CD4-positive, alpha-beta memory T cell (primary cell): ENCODE measurements at regions of chr1 and their contacts with region 1.

Region 1: DNA sequence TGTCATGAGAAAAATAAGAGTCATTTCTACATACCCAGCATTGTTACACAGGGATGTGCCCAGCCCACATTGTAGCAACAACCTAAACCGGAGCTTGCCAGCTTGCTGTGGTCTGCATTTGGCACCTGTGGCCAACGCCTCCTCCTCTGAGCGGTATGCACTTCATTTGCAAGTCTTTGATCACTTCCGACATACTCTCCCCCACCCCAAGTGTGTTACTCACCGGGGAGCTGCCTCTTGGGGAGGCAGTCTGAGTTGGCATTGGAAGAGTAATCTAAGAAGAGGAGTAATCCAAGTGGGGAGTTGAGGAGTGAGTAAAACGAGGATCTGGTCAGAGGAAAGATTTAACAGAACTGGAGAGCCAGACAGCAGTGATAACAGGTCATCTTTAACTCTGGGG is 3.8 kb downstream of the BCL9 start:
- DNase-seq: peak; percentile 86 to 96 (median 90)
- H3K4me3 ChIP-seq: no peak overlapping the region
- H3K4me3 Mint-ChIP-seq: peak overlapping the region in 6 of 8 donors; percentile 63 to 76 (median 72)
- H3K27ac ChIP-seq: no peak overlapping the region
- H3K27ac Mint-ChIP-seq: peak overlapping the region in 6 of 7 donors; percentile 72 to 96 (median 82)
- H3K4me1 ChIP-seq: peaks cover 66% of the 10 kb centered on the region
- H3K4me1 Mint-ChIP-seq: peaks cover 20 to 44% (median 31%) of the 10 kb centered on the region in 4 donors
- H3K27me3 ChIP-seq: no peaks in the 10 kb centered on the region
- H3K27me3 Mint-ChIP-seq: no peaks in the 10 kb centered on the region

Region 2: GRCh38 chr1:147515046-147515869 is 29.9 kb before region 1 on chr1:
- CTCF ChIA-PET with region 1: interaction called, 13 read pairs
- POLR2A ChIA-PET with region 1: interaction called, 6 read pairs
- intact Hi-C with region 1: no loop called
- DNase-seq: peak in 4 of 5 donors; percentile 9 to 29 (median 24)
- H3K4me3 ChIP-seq: no peak overlapping the region
- H3K4me3 Mint-ChIP-seq: no peak overlapping the region
- H3K27ac ChIP-seq: no peak overlapping the region
- H3K27ac Mint-ChIP-seq: peak overlapping the region in 2 of 7 donors; percentile 39 to 51
- H3K4me1 ChIP-seq: no peaks in the 10 kb centered on the region
- H3K4me1 Mint-ChIP-seq: peaks cover 5 to 7% (median 6%) of the 10 kb centered on the region in 4 donors
- H3K27me3 ChIP-seq: no peaks in the 10 kb centered on the region
- H3K27me3 Mint-ChIP-seq: peaks cover 0 to 9% of the 10 kb centered on the region in 2 donors

Region 3: DNA sequence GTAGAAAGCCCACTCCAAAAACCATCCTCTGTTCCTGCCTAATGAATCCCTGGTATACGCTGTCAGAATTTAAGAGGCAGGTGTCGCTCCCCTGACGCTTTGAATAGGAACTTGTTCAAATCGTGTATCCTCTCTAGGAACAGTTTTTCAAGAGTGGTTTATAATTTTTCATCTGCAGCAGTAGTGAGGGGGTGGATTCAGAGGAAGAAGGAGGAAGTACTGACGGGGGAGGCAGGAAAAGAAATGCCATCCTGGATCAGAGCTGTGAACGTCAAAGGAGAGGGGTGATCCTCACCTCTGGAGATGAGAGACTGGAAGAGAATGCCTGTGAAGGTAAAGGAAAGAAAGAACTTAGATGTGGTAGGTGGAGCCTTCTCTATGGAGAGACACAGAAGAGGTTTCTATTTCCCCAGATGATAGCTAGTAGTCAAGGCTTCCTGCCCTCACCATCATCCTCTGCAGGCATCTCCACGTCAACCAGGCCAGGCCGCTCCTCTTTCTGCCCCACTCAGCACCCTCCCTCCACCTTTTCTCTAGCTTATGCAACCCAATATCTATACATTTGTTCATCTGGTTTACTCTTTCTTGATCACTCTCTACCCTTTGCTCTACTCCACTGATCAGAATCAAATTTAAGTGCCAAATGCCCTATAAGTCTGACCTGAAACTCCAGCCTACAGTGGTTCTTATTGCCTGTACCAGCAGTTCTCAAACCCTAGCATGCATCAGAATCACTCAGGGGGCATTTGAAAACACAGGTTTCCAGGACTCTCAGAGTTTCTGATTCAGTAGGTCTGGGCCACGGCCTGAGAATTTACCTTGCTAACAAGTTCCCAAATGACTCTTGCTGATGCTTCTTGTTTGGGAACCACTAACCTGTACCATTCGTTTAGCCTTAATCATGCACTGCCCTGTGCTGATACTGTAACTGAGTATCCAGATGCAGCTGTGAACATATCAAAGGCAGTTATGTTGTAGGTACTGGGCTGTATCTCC is 16.9 kb before region 1 on chr1:
- CTCF ChIA-PET with region 1: interaction called, 4 read pairs
- POLR2A ChIA-PET with region 1: interaction called, 17 read pairs
- intact Hi-C with region 1: no loop called
- DNase-seq: peak in 3 of 5 donors; percentile 10 to 27 (median 15)
- H3K4me3 ChIP-seq: no peak overlapping the region
- H3K4me3 Mint-ChIP-seq: no peak overlapping the region
- H3K27ac ChIP-seq: no peak overlapping the region
- H3K27ac Mint-ChIP-seq: no peak overlapping the region
- H3K4me1 ChIP-seq: peaks cover 14% of the 10 kb centered on the region
- H3K4me1 Mint-ChIP-seq: peaks cover 0 to 3% (median 0%) of the 10 kb centered on the region in 4 donors
- H3K27me3 ChIP-seq: no peaks in the 10 kb centered on the region
- H3K27me3 Mint-ChIP-seq: peaks cover 0 to 7% of the 10 kb centered on the region in 2 donors

Region 4: DNA sequence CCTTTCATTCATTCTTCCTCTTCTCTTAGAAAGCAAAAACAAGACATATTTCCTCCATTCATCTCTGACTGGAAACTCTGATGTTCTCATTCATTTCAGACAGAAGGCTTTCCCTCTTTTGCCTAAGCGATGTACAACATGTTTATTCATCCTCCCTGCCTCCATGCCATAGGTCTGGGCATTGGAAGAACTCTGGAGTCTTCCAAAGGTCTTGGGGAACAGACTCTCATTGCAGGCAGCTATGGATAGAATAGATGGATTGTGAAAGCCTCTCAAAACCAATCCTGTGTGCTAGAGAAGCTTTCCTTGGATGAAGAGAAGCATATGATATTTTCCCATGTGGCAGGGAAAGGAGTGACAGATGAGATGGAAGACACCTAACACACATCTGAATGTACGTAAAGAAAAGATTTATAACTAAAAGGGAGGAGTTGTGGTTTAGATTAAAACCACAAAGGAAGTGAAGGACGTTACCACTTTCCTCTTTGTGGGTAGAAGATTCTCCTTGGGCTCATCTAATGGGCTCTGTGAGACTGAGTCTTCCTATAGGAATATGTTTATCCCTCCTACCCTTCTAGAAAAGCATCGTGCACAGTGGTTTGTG is 34.9 kb after region 1 on chr1:
- CTCF ChIA-PET with region 1: no interaction called
- POLR2A ChIA-PET with region 1: interaction called, 7 read pairs
- intact Hi-C with region 1: loop called (anchors 2 kb)
- DNase-seq: peak; percentile 37 to 53 (median 40)
- H3K4me3 ChIP-seq: no peak overlapping the region
- H3K4me3 Mint-ChIP-seq: peak overlapping the region in 7 of 8 donors; percentile 4 to 86 (median 61)
- H3K27ac ChIP-seq: no peak overlapping the region
- H3K27ac Mint-ChIP-seq: peak overlapping the region in 4 of 7 donors; percentile 1 to 66 (median 49)
- H3K4me1 ChIP-seq: peaks cover 23% of the 10 kb centered on the region
- H3K4me1 Mint-ChIP-seq: peaks cover 16 to 26% (median 21%) of the 10 kb centered on the region in 4 donors
- H3K27me3 ChIP-seq: peaks cover 11% of the 10 kb centered on the region
- H3K27me3 Mint-ChIP-seq: peaks cover 30 to 32% of the 10 kb centered on the region in 2 donors

Region 5: GRCh38 chr1:147599362-147600118 is 54.4 kb after region 1 on chr1:
- CTCF ChIA-PET with region 1: interaction called, 6 read pairs
- POLR2A ChIA-PET with region 1: interaction called, 121 read pairs
- intact Hi-C with region 1: loop called (anchors 1 kb)
- DNase-seq: peak; percentile 94 to 96 (median 95)
- H3K4me3 ChIP-seq: peak overlapping the region; percentile 67 to 72
- H3K4me3 Mint-ChIP-seq: peak overlapping the region; percentile 86 to 92 (median 90)
- H3K27ac ChIP-seq: peak overlapping the region; percentile 47
- H3K27ac Mint-ChIP-seq: peak overlapping the region; percentile 48 to 91 (median 85)
- H3K4me1 ChIP-seq: peaks cover 24% of the 10 kb centered on the region
- H3K4me1 Mint-ChIP-seq: peaks cover 15 to 33% (median 25%) of the 10 kb centered on the region in 4 donors
- H3K27me3 ChIP-seq: no peaks in the 10 kb centered on the region
- H3K27me3 Mint-ChIP-seq: no peaks in the 10 kb centered on the region

Region 6: DNA sequence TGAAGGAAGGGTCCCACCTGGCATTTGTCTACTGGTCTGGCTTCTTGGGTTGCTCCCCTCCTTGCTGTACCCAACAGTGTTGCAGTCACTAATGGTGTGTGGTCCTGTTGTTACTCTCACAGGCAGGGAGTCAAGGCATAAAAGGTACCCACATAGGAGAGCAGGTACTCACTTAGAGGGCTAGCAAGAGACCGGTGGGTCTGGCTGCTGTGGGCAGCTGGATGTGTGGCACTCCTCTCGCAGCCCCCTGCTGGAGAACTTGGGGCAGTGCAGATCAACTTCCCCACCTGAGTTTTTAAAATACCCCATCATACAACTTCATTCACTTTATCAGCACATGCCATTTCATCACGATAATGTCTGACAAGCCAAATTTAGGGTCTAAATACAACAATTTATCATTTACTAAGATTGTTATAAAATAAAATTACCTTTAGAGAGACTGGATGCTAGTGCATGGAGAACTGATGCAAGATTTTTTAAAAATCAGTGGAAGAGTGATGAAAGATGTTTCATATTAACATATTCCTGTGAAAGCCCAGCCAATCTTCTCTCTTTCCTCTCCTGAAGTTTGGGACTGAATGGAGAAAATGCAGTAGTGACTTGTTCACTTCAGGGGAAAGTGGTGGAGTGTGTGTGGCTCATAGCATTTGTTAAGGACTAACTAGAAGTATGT is 82.4 kb after region 1 on chr1:
- CTCF ChIA-PET with region 1: interaction called, 9 read pairs
- POLR2A ChIA-PET with region 1: interaction called, 4 read pairs
- intact Hi-C with region 1: loop called (anchors 1 kb)
- DNase-seq: peak in 4 of 5 donors; percentile 42 to 54 (median 46)
- H3K4me3 ChIP-seq: no peak overlapping the region
- H3K4me3 Mint-ChIP-seq: peak overlapping the region in 2 of 8 donors; percentile 13 to 18
- H3K27ac ChIP-seq: no peak overlapping the region
- H3K27ac Mint-ChIP-seq: peak overlapping the region in 4 of 7 donors; percentile 10 to 62 (median 35)
- H3K4me1 ChIP-seq: peaks cover 31% of the 10 kb centered on the region
- H3K4me1 Mint-ChIP-seq: peaks cover 31 to 46% (median 37%) of the 10 kb centered on the region in 4 donors
- H3K27me3 ChIP-seq: no peaks in the 10 kb centered on the region
- H3K27me3 Mint-ChIP-seq: no peaks in the 10 kb centered on the region

Region 7: DNA sequence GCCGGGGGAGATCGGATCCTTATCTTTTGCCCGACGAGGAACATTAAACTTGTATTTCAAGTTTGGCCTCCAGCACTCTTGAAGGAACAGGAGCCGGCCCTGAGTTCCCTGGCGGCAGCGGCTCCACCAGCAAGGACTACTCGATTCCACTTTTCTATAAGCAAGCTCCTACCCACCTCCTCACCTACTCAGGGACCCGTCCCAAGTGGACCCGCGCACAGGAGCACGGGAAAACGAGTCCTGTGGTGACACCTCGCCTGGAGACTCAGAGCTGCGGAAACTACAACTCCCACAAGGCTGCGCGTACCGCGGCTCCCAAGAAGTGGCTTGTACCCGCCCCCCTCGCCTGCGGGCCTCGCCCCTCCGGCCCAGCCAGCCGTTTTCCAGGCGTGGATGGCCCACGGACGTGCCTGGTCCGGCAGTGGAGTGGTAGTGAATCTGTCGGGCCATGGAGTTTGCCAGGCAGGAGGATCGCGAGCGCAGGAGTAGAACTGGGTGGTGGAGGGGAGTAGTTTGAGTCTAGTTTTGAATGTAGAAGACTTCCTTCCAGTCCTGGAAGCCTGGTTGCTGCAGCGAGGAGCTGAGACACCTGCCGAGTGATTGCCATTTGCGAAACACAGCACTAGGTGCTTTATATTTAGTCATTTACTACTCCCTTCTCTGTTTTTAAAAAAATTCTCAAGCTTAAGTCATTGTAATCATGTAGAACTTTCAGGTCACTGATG is 125.3 kb after region 1 on chr1 and contains the start of gene ACP6:
- CTCF ChIA-PET with region 1: interaction called, 3 read pairs
- POLR2A ChIA-PET with region 1: interaction called, 6 read pairs
- intact Hi-C with region 1: loop called (anchors 1 kb)
- DNase-seq: peak; percentile 80 to 90 (median 84)
- H3K4me3 ChIP-seq: peak within 1 kb of the TSS; percentile 79 to 91
- H3K4me3 Mint-ChIP-seq: peak within 1 kb of the TSS; percentile 96 to 99 (median 97)
- H3K27ac ChIP-seq: peak within 1 kb of the TSS; percentile 70
- H3K27ac Mint-ChIP-seq: peak within 1 kb of the TSS; percentile 86 to 97 (median 93)
- H3K4me1 ChIP-seq: peaks cover 14% of the 10 kb centered on the region
- H3K4me1 Mint-ChIP-seq: peaks cover 17 to 34% (median 22%) of the 10 kb centered on the region in 4 donors
- H3K27me3 ChIP-seq: no peaks in the 10 kb centered on the region
- H3K27me3 Mint-ChIP-seq: peaks cover 0 to 4% of the 10 kb centered on the region in 2 donors
- total RNA-seq, gene ACP6: 22.0 to 22.7 TPM